ENCODE measurements at regions of chr3 and their contacts with region 1.

Region 1: GRCh38 chr3:27639271-27639670 is 82.9 kb downstream of the EOMES start:
- DNase-seq: no peak
- ATAC-seq: no peak
- H3K4me3 ChIP-seq: no peak overlapping the region
- H3K27ac ChIP-seq: no peak overlapping the region
- H3K4me1 ChIP-seq: peaks cover 0 to 4% of the 10 kb centered on the region in 2 donors
- H3K27me3 ChIP-seq: no peaks in the 10 kb centered on the region

Region 2: GRCh38 chr3:27484015-27484844 is 155.0 kb before region 1 on chr3 and contains the start of gene SLC4A7:
- intact Hi-C with region 1: loop called in 1 of 2 experiments (anchors 5 kb)
- DNase-seq: peak; percentile 99 to 100
- ATAC-seq: peak; percentile 99
- H3K4me3 ChIP-seq: peak within 1 kb of the TSS; percentile 84 to 96
- H3K27ac ChIP-seq: peak within 1 kb of the TSS; percentile 71 to 91
- H3K4me1 ChIP-seq: no peaks in the 10 kb centered on the region
- H3K27me3 ChIP-seq: no peaks in the 10 kb centered on the region
- total RNA-seq, gene SLC4A7: 61.0 to 62.8 TPM

Measured in aorta (tissue), 5 donors.